ENCODE measurements at regions of chr7 and their contacts with region 1.

Region 1: DNA sequence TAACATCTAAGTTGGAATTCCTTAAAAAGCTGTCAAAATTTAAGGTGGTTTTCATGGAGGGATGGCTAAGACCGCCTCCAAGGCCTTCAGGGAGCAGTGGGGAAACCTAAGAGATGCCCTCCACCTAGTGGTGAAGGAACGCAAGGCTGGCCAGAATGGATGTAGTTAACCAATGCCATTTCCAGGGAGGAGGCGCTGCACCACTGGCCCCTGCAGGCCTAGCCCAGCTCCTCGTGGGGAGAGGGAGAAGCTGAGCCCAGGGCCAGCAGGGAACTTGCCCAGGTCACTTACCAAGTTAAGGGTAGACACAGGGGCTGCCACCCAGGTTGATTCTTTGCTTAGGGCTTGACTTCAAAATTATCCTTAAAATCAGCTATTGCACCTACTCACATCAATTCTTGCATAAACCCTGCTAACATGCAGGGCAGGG is 32.0 kb downstream of the FIGNL1 start:
- DNase-seq: peak; percentile 59 to 72 (median 64)
- ATAC-seq: peak; percentile 49 to 94 (median 88)
- H3K4me3 ChIP-seq: no peak overlapping the region
- H3K27ac ChIP-seq: no peak overlapping the region
- H3K4me1 ChIP-seq: peaks cover 0 to 32% (median 0%) of the 10 kb centered on the region in 12 donors
- H3K27me3 ChIP-seq: no peaks in the 10 kb centered on the region
- CTCF ChIP-seq: peak; percentile 51 to 86 (median 67)
- POLR2A ChIP-seq: no peak

Region 2: DNA sequence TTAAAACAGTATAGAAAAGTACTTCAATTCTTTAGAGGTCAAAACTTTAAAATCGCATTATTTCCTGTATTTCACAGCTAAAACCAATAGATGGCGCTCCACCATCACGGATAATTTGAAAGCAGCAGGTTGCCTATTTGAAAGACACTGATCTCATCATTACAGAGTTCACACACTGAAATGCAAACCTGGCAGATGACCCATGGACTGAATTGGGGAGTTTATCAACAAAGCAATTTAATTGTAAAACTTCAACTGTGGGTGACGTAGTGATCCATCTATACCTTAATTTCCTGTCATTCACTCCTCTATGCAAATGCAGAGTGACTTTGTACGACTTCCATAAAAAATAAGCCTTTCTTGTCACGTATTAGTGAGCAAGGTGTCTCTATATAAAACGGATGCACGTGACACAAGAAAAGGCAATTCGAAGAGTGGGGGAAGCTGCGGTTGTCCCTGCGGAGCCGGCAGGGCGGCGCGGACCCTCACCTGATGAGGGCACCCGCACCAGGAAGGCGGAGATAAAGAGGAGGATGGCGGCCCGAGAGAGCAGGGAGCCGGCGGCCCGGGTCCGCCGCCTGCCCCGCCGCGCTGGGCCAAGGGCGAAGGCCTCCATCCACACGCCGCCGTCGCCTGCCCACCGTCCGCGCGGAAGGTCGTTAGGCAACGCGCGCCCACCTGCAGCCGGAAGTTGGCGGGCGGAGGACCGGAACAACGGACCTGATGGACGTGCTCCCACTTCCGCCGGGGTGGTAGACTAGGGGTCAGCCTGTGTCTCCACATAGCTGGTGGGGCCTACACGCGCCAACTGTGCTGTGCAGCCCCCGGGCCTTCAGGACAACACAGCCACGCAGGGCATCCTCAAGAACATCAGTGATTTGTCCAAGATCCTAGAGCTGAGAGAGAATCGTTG is 325.3 kb before region 1 on chr7 and contains the start of gene ZPBP:
- intact Hi-C with region 1: loop called in 4 of 10 experiments (anchors 5 kb)
- DNase-seq: peak in 4 of 5 donors; percentile 10 to 66 (median 24)
- ATAC-seq: peak in 2 of 4 donors; percentile 22 to 38
- H3K4me3 ChIP-seq: peak within 1 kb of the TSS; percentile 22 to 58 (median 46)
- H3K27ac ChIP-seq: no peak within 1 kb of the TSS
- H3K4me1 ChIP-seq: peaks cover 0 to 6% (median 0%) of the 10 kb centered on the region in 12 donors
- H3K27me3 ChIP-seq: peaks cover 0 to 17% (median 0%) of the 10 kb centered on the region in 9 donors
- CTCF ChIP-seq: peak; percentile 55 to 80 (median 70)
- POLR2A ChIP-seq: no peak
- total RNA-seq, gene ZPBP: not detected

Region 3: DNA sequence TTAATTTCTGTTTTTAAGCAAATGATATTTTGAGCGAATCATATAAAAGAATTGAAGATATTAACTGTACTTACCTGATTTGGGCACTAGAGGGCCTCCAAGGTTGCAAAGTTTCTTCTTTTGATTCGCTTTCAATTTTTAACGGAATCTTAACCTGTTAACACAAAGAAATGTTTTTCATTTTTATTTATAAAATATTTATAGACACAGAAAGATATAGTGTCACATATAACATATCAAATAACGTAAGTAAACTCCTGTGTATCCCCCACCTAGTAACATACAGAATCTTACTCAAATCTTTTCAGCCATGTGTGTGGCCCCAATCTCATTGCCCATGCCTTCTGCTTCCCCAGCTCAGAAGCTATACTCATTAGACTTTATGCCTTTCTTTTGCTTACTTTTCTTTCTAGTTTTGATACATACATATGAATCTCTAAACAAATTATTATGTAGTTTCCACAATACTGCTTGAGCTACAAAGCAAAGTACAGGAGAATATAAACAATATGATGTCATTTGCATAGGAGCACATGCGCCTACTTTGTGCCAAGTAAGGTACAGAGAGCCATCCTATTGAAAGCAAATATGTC is 275.6 kb before region 1 on chr7:
- intact Hi-C with region 1: loop called in 9 of 10 experiments (anchors 2 to 10 kb)
- DNase-seq: no peak
- ATAC-seq: no peak
- H3K4me3 ChIP-seq: no peak overlapping the region
- H3K27ac ChIP-seq: no peak overlapping the region
- H3K4me1 ChIP-seq: peaks cover 0 to 4% (median 0%) of the 10 kb centered on the region in 12 donors
- H3K27me3 ChIP-seq: peaks cover 0 to 9% (median 0%) of the 10 kb centered on the region in 9 donors
- CTCF ChIP-seq: peak; percentile 54 to 81 (median 72)
- POLR2A ChIP-seq: no peak

Region 4: DNA sequence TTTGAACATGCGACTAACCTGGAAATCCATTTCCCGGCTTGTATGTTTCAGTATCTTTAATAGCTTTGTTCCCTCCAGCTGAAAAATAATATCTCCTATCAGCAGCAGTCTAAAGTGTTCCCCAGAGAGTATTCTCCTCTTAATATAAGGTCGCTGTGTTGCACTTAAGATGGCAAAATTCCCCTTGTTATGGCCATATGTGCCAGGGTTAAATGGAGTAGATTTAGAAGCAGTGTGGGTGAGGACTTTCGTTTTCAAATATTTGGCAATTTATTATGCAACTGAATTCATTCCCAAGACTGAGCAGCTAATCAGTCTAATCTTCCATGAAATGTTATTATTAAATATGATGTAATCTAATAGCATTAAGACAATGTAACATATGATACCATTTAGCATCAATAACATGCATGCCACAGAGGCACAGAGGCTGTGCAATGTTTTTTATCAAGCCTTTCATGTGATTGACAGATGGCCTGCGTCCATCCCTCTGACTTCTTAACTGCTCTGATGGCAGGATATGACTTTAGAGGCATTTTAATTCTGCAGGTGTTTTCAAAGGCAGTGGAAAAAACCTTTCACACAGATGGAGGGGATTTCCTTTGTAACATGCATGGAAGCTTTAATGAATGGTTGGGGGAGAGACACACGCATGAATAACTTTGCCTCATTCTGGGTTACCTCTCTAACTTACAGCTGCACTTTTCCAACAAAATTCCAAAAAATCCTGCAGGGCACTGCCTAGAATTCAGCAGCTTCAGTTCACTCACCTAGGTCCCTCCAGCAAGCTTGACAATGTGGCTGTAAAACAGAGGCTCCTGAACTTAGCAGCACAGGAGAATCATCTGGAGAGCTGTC is 269.9 kb before region 1 on chr7:
- intact Hi-C with region 1: loop called in 9 of 10 experiments (anchors 2 to 10 kb)
- DNase-seq: no peak
- ATAC-seq: no peak
- H3K4me3 ChIP-seq: no peak overlapping the region
- H3K27ac ChIP-seq: no peak overlapping the region
- H3K4me1 ChIP-seq: no peaks in the 10 kb centered on the region
- H3K27me3 ChIP-seq: peaks cover 0 to 9% (median 0%) of the 10 kb centered on the region in 9 donors
- CTCF ChIP-seq: no peak
- POLR2A ChIP-seq: no peak

Region 5: GRCh38 chr7:50206453-50207250 is 211.4 kb before region 1 on chr7:
- intact Hi-C with region 1: loop called (anchors 2 to 10 kb)
- DNase-seq: no peak
- ATAC-seq: peak in 3 of 4 donors; percentile 24 to 63 (median 39)
- H3K4me3 ChIP-seq: no peak overlapping the region
- H3K27ac ChIP-seq: peak overlapping the region in 1 of 12 donors; percentile 52
- H3K4me1 ChIP-seq: peaks cover 0 to 48% (median 0%) of the 10 kb centered on the region in 12 donors
- H3K27me3 ChIP-seq: peaks cover 0 to 8% (median 0%) of the 10 kb centered on the region in 9 donors
- CTCF ChIP-seq: no peak
- POLR2A ChIP-seq: no peak

Measured in heart left ventricle (tissue), 16 donors.